ENCODE measurements at regions of chr14 and their contacts with region 1.

Region 1: GRCh38 chr14:92729626-92730358 is 18.6 kb downstream of the LGMN start:
- DNase-seq: peak; percentile 80
- H3K4me3 Mint-ChIP-seq: no peak overlapping the region
- H3K27ac Mint-ChIP-seq: peak overlapping the region; percentile 49
- H3K4me1 Mint-ChIP-seq: peaks cover 26% of the 10 kb centered on the region
- H3K27me3 Mint-ChIP-seq: no peaks in the 10 kb centered on the region
- CTCF ChIP-seq: no peak

Region 2: DNA sequence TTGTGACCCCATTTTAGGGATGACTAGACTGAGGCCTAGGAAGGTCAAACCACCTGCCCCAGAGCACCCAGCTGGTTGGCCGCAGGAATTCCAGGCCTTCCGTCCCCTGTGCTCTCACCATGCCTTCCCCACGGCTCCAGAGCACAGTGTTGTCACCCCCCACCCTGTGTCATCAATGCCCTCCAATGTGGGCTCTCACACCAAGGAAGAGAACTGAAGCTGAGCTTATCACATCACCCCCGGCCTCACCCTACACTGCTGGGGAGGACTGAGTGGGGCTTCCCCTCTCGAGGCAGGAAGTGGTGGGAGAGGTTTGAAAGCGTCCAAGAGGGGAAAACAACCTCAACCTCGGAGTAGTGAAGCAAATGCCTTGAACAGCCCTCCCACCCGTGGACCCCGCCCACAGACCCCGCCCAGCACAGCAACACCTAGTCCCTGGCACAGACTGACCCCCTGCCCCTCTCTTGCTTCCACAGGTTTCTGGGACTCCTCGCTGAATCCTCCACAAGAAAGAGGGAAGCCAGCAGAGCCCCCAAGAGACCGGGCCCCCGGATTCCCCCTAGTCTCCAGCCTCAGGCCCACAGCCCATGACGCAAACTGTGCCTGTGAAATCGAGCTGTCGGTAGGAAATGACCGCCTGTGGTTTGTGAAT is 78.6 kb before region 1 on chr14:
- CTCF ChIA-PET with region 1: no interaction called
- POLR2A ChIA-PET with region 1: no interaction called
- intact Hi-C with region 1: no loop called
- DNase-seq: no peak
- H3K4me3 Mint-ChIP-seq: no peak overlapping the region
- H3K27ac Mint-ChIP-seq: no peak overlapping the region
- H3K4me1 Mint-ChIP-seq: peaks cover 23% of the 10 kb centered on the region
- H3K27me3 Mint-ChIP-seq: no peaks in the 10 kb centered on the region
- CTCF ChIP-seq: no peak

Region 3: DNA sequence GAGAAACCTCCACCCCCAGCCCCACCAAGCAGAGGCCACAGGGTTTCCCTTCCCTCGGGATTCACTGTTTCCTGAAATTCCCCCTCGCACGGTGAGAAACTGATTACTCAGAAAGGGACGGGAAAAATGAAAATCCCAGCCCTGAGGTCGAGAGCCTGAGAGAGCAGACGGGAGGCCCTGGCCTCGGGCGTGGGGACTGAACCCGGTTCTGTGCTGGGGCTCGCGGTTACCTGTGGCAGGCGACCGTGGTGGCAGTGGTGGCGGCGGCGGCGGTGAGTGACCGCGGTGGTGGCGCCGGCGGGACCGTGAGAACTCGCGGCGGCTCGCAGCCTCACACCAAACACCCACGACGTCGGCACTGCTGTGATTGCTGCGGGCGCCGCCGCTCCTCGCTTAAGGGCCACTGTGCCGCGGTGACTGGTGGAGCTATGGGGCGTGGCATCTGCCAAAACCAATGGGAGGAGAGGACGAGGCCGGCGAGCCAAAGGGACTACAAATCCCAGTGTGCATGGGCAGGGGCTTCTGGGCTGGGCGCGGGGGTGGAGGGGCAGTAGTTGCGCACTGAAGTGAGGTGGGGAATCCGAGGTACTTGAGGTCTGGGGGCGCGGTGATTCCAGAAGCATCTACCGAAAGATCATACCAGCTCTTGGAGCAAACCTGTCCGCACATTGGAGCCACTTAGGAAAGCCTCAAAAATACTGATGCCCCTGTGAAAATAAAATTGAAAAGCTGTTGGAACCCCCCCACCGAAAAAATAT is 18.6 kb after region 1 on chr14 and contains the start of gene LGMN:
- CTCF ChIA-PET with region 1: interaction called, 5 read pairs
- POLR2A ChIA-PET with region 1: interaction called, 12 read pairs
- intact Hi-C with region 1: no loop called
- DNase-seq: peak; percentile 95
- H3K4me3 Mint-ChIP-seq: peak within 1 kb of the TSS; percentile 95
- H3K27ac Mint-ChIP-seq: peak within 1 kb of the TSS; percentile 68
- H3K4me1 Mint-ChIP-seq: peaks cover 17% of the 10 kb centered on the region
- H3K27me3 Mint-ChIP-seq: no peaks in the 10 kb centered on the region
- CTCF ChIP-seq: no peak
- total RNA-seq, gene LGMN: 16.6 and 20.0 TPM in 2 replicates

Region 4: GRCh38 chr14:92886337-92886736 is 156.5 kb after region 1 on chr14:
- CTCF ChIA-PET with region 1: no interaction called
- POLR2A ChIA-PET with region 1: no interaction called
- intact Hi-C with region 1: no loop called
- DNase-seq: no peak
- H3K4me3 Mint-ChIP-seq: no peak overlapping the region
- H3K27ac Mint-ChIP-seq: no peak overlapping the region
- H3K4me1 Mint-ChIP-seq: no peaks in the 10 kb centered on the region
- H3K27me3 Mint-ChIP-seq: peaks cover 60% of the 10 kb centered on the region
- CTCF ChIP-seq: no peak

Measured in MCF 10A (cell line).